ENCODE measurements at regions of chr1 and their contacts with region 1.

Region 1: GRCh38 chr1:222634180-222635013 is 16.5 kb downstream of the MIA3 start:
- DNase-seq: peak; percentile 85
- H3K4me3 ChIP-seq: no peak overlapping the region
- H3K27ac ChIP-seq: no peak overlapping the region
- H3K27me3 ChIP-seq: no peaks in the 10 kb centered on the region
- CTCF ChIP-seq: peak; percentile 85

Region 2: GRCh38 chr1:222465211-222466041 is 169.0 kb before region 1 on chr1:
- CTCF ChIA-PET with region 1: interaction called, 134 read pairs
- POLR2A ChIA-PET with region 1: interaction called, 10 read pairs
- DNase-seq: peak; percentile 82
- H3K4me3 ChIP-seq: peak overlapping the region; percentile 50
- H3K27ac ChIP-seq: peak overlapping the region; percentile 96
- H3K27me3 ChIP-seq: no peaks in the 10 kb centered on the region
- CTCF ChIP-seq: peak; percentile 94

Region 3: DNA sequence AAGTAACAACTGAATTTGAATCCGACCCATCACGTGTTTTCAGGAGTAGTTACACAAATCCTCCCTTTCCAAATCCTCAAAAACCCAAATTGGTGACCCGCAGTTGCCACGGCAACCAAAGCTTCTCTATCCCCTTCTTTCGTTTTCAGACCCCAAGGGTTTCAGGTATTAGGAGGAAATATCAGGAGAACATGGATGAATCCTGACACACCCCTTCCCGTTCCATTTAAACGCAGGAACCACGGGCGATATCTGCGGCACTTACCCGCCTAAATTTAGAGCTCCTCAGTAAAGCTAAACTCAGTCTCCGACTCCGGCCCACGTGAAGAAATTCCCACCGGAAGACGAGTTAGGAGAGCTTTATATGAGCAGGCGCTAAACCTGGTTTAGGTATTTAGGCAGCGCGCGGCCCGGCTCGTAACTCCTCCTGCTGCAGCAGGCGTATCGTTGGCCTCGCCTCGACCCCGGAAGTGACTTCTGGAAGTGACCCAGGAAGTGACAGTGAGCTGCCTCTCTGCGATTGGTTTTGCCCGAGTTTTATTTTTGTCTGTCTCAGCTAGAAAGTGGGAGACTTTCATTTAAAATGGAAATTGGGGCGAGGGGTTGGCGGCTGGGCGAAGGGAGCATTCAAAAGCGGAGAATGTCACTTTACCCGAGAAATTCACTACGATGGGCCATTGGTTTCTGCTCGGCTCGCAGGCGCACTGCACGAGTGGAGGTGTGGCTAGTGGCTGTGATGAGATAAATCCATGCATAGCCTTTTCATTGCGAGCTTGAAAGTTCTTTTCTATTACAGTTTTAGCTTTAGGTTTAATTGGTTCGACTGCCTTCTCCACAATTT is 44.7 kb before region 1 on chr1 and contains the start of gene TAF1A:
- CTCF ChIA-PET with region 1: interaction called, 13 read pairs
- POLR2A ChIA-PET with region 1: interaction called, 5 read pairs
- DNase-seq: peak; percentile 42
- H3K4me3 ChIP-seq: peak within 1 kb of the TSS; percentile 81
- H3K27ac ChIP-seq: peak within 1 kb of the TSS; percentile 41
- H3K27me3 ChIP-seq: no peaks in the 10 kb centered on the region
- CTCF ChIP-seq: no peak
- polyA plus RNA-seq, gene TAF1A: 4.9 and 7.3 TPM in 2 replicates

Region 4: DNA sequence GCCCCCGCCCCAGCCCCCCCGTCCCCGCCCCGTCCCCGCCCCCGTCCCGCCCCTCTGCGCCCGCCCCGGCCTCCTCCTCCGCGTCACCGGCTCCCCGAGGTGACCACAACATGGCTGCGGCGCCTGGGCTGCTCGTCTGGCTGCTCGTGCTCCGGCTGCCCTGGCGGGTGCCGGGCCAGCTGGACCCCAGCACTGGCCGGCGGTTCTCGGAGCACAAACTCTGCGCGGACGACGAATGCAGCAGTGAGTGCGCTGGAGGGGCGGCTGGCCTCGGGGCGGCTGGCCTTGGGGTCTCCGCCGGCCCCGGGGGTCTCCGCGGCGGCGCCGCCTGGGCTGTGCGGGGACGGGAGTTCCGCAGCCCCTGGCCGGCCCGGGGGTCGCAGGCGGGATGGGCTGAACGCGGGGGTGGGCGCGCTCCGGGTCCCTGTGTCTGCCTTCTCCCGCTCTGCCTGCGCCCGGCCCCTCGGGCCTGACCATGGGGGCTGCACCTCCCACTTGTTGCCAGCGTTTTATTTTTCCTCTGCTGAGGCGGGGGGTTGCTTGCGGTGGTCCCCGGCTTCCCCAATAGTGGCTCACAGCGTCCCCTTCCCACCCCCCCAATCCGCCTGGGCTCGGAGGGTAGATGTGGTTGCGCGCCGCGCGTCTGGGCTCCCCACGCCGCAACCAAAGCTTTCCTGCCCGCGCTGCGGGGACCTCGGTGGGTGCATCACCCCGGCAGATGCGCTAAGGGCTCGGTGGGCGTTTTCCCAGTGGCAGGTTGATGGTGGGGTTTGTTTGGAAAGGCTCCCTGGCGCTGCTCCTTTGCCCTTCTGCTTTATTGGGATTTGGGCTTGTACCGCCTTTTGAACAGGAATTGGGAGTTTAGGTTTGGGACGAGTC is 16.2 kb before region 1 on chr1 and contains the start of gene MIA3:
- CTCF ChIA-PET with region 1: interaction called, 49 read pairs
- POLR2A ChIA-PET with region 1: no interaction called
- DNase-seq: no peak
- H3K4me3 ChIP-seq: peak within 1 kb of the TSS; percentile 74
- H3K27ac ChIP-seq: peak within 1 kb of the TSS; percentile 69
- H3K27me3 ChIP-seq: peaks cover 4% of the 10 kb centered on the region
- CTCF ChIP-seq: no peak
- polyA plus RNA-seq, gene MIA3: 47.2 and 53.6 TPM in 2 replicates